Caco-2 (cell line): ENCODE measurements at regions of chr6 and their contacts with region 1.

Region 1: DNA sequence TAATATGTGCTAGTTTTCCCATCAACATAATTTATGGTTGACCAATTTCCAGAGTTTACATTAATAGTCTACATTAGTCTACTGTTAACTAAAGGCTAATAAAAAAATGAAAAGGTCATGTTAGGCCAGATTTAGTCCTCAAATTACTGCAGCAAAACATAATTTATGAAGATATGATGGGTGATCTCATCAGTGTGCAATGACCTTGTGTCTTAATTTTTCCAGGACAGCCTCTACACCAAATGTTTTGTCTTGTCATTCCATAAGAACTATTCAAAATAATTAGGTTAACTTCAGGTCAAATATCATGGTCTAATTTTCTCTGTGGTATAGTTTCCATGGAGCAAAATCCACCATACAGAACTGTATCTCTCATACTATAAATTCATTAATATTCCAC is 234.2 kb downstream of the COL12A1 start:
- DNase-seq: no peak
- H3K4me3 ChIP-seq: no peak overlapping the region
- H3K4me3 Mint-ChIP-seq: no peak overlapping the region
- H3K27ac Mint-ChIP-seq: no peak overlapping the region
- H3K4me1 ChIP-seq: peaks cover 36% of the 10 kb centered on the region
- H3K4me1 Mint-ChIP-seq: peaks cover 17% of the 10 kb centered on the region
- H3K27me3 ChIP-seq: no peaks in the 10 kb centered on the region
- H3K27me3 Mint-ChIP-seq: no peaks in the 10 kb centered on the region
- CTCF ChIP-seq: no peak

Region 2: DNA sequence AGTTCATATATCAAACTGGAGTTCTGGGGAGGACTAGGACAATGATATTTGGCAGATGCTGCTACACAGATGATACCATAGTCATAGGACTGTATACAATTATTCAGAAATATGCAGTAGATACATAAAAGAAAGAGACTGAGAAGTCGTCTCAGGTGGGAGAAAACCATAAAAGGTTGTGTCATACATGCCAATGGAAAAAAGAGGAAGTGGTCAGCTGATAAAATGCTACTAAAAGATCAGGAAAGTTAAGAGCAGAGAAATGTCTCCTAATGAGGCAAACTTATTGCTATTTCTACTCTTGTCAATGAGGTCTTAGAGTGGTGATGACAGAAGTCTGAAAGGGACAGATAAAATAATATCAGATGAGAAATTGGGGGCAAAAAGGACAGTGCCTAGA is 173.3 kb before region 1 on chr6:
- CTCF ChIA-PET with region 1: no interaction called
- POLR2A ChIA-PET with region 1: no interaction called
- intact Hi-C with region 1: no loop called
- DNase-seq: no peak
- H3K4me3 ChIP-seq: no peak overlapping the region
- H3K4me3 Mint-ChIP-seq: no peak overlapping the region
- H3K27ac Mint-ChIP-seq: no peak overlapping the region
- H3K4me1 ChIP-seq: no peaks in the 10 kb centered on the region
- H3K4me1 Mint-ChIP-seq: no peaks in the 10 kb centered on the region
- H3K27me3 ChIP-seq: no peaks in the 10 kb centered on the region
- H3K27me3 Mint-ChIP-seq: no peaks in the 10 kb centered on the region
- CTCF ChIP-seq: no peak

Region 3: GRCh38 chr6:75091467-75092190 is 120.0 kb after region 1 on chr6:
- CTCF ChIA-PET with region 1: no interaction called
- POLR2A ChIA-PET with region 1: no interaction called
- intact Hi-C with region 1: loop called (anchors 1 kb)
- DNase-seq: no peak
- H3K4me3 ChIP-seq: no peak overlapping the region
- H3K4me3 Mint-ChIP-seq: no peak overlapping the region
- H3K27ac Mint-ChIP-seq: no peak overlapping the region
- H3K4me1 ChIP-seq: peaks cover 26% of the 10 kb centered on the region
- H3K4me1 Mint-ChIP-seq: no peaks in the 10 kb centered on the region
- H3K27me3 ChIP-seq: no peaks in the 10 kb centered on the region
- H3K27me3 Mint-ChIP-seq: no peaks in the 10 kb centered on the region
- CTCF ChIP-seq: no peak

Region 4: DNA sequence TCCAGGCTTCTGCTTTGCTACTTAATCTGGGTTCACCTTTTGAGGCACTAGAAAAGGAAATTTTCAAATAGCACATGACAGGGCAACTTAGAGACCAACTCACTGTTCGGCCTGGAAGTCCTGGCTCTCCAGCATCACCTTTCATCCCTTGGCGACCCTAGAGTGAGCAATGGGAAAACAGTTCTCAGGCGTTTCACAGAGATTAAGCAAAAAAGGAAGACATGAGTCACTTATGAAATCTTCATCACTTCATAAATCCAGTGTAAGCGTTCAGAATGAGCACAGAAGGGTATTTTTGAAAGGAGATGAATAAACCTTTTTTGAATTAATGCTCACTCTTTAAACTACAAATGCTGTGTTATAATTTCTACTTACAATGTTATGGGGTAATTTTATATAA is 130.3 kb after region 1 on chr6:
- CTCF ChIA-PET with region 1: interaction called, 3 read pairs
- POLR2A ChIA-PET with region 1: no interaction called
- intact Hi-C with region 1: loop called (anchors 1 kb)
- DNase-seq: no peak
- H3K4me3 ChIP-seq: no peak overlapping the region
- H3K4me3 Mint-ChIP-seq: no peak overlapping the region
- H3K27ac Mint-ChIP-seq: no peak overlapping the region
- H3K4me1 ChIP-seq: peaks cover 24% of the 10 kb centered on the region
- H3K4me1 Mint-ChIP-seq: peaks cover 31% of the 10 kb centered on the region
- H3K27me3 ChIP-seq: no peaks in the 10 kb centered on the region
- H3K27me3 Mint-ChIP-seq: no peaks in the 10 kb centered on the region
- CTCF ChIP-seq: no peak